GM12878 (cell line): ENCODE measurements at regions of chr9 and their contacts with region 1.

Region 1: DNA sequence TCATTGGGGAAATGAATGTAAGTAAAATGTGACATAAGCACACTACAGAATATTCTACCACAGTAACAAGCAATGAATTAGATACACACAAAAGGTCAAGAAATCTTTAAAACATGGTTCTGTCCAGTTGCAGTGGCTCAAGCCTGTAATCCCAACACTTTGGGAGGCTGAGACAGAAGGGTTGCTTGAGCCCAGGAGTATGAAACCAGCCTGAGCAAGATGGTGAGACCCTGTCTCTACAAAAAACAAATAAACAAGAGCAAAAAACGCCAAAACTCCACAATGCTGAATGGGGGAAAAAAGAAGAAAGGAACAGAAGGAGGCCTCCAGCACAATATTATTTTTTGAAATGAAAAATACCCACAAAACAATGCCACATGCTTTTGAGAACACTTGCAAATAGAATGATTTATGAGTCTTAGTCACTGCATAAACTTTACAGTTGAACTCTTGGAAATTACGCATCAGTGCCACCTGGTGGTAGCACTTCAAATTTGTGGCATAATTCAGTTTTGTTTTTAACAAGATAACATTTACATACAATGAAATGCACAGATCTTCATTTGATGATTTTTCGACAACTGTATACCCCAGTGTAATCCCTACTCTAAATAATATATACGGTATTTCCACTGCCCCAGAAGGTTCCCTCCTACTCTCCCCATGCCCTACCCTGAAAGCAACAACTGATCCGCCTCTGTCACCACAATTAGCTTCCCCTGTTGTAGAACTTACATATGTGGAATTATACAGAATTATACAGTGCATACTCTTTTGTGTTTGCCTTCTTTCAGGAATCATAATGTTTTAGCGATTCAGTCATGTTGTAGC is 14.4 kb upstream of the SPINK4 start:
- DNase-seq: peak; percentile 64
- ATAC-seq: peak; percentile 63
- H3K4me3 ChIP-seq: no peak overlapping the region
- H3K27ac ChIP-seq: no peak overlapping the region
- H3K4me1 ChIP-seq: peaks cover 39% of the 10 kb centered on the region
- H3K27me3 ChIP-seq: no peaks in the 10 kb centered on the region
- CTCF ChIP-seq: peak; percentile 56 to 76 (median 64); a peak in 5 of 6 replicates
- EP300 ChIP-seq: no peak
- POLR2A ChIP-seq: no peak
- RAD21 ChIP-seq: peak; percentile 85

Region 2: DNA sequence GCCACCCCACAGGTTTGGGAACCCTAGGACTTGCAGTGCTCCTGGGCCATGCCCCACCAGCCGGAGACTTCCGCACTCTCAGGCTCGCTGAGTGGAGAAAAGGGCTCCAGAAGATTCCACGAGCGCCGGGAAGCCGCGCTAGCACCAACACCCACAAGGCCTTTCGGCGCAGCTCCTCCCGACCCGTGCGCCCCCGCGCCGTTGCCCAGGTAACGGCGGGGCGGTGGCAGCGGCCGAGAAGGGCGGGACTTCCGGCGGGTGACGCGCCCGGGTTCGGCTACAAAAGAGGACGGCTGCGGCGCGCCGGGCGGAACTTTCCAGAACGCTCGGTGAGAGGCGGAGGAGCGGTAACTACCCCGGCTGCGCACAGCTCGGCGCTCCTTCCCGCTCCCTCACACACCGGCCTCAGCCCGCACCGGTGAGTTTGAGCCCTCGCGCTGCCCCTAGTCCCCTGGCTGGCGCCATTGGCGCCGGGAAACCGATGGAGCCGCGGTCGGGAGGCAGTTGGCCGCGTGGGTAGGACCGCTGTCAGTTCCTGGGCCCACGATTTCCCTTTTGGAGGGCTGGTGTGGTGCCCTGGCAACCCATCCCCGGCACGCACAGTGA is 200.5 kb before region 1 on chr9 and contains the start of gene DNAJA1:
- CTCF ChIA-PET with region 1: interaction called, 8 read pairs
- POLR2A ChIA-PET with region 1: interaction called, 3 read pairs
- RAD21 ChIA-PET with region 1: interaction called, 15 read pairs
- SMC1A ChIA-PET with region 1: interaction called, 4 read pairs
- in situ Hi-C with region 1: no loop called
- intact Hi-C with region 1: loop called (anchors 2 kb)
- DNase-seq: peak; percentile 57
- ATAC-seq: peak; percentile 90
- H3K4me3 ChIP-seq: peak within 1 kb of the TSS; percentile 75
- H3K27ac ChIP-seq: peak within 1 kb of the TSS; percentile 97
- H3K4me1 ChIP-seq: peaks cover 10% of the 10 kb centered on the region
- H3K27me3 ChIP-seq: no peaks in the 10 kb centered on the region
- CTCF ChIP-seq: no peak
- EP300 ChIP-seq: no peak; a peak in 1 of 4 replicates
- POLR2A ChIP-seq: peak; percentile 99
- RAD21 ChIP-seq: no peak
- polyA plus RNA-seq, gene DNAJA1: 115 to 149 TPM

Region 3: GRCh38 chr9:33130508-33130911 is 95.0 kb before region 1 on chr9:
- CTCF ChIA-PET with region 1: interaction called, 21 read pairs
- POLR2A ChIA-PET with region 1: no interaction called
- RAD21 ChIA-PET with region 1: interaction called, 17 read pairs
- SMC1A ChIA-PET with region 1: interaction called, 22 read pairs
- in situ Hi-C with region 1: no loop called
- intact Hi-C with region 1: loop called (anchors 2 kb)
- DNase-seq: no peak
- ATAC-seq: peak; percentile 92
- H3K4me3 ChIP-seq: peak overlapping the region; percentile 1; the same call in 1 of the 2 replicates
- H3K27ac ChIP-seq: peak overlapping the region; percentile 75
- H3K4me1 ChIP-seq: peaks cover 52% of the 10 kb centered on the region
- H3K27me3 ChIP-seq: no peaks in the 10 kb centered on the region
- CTCF ChIP-seq: no peak
- EP300 ChIP-seq: no peak
- POLR2A ChIP-seq: no peak
- RAD21 ChIP-seq: 0 out of 2 replicates have a peak, but pooled peaks have one; percentile 4

Region 4: GRCh38 chr9:33159760-33160127 is 65.8 kb before region 1 on chr9:
- CTCF ChIA-PET with region 1: interaction called, 10 read pairs
- POLR2A ChIA-PET with region 1: interaction called, 3 read pairs
- RAD21 ChIA-PET with region 1: interaction called, 21 read pairs
- SMC1A ChIA-PET with region 1: interaction called, 34 read pairs
- in situ Hi-C with region 1: no loop called
- intact Hi-C with region 1: no loop called
- DNase-seq: no peak
- ATAC-seq: peak; percentile 60
- H3K4me3 ChIP-seq: peak overlapping the region; percentile 90
- H3K27ac ChIP-seq: peak overlapping the region; percentile 92
- H3K4me1 ChIP-seq: peaks cover 74% of the 10 kb centered on the region
- H3K27me3 ChIP-seq: no peaks in the 10 kb centered on the region
- CTCF ChIP-seq: no peak
- EP300 ChIP-seq: peak in 1 of 2 experiments; percentile 81; a peak in 3 of 4 replicates
- POLR2A ChIP-seq: peak; percentile 53; the same call in 1 of the 2 replicates
- RAD21 ChIP-seq: 0 out of 2 replicates have a peak, but pooled peaks have one; percentile 18

Region 5: GRCh38 chr9:33177639-33178038 is 47.9 kb before region 1 on chr9:
- CTCF ChIA-PET with region 1: interaction called, 13 read pairs
- POLR2A ChIA-PET with region 1: interaction called, 3 read pairs
- RAD21 ChIA-PET with region 1: interaction called, 3 read pairs
- SMC1A ChIA-PET with region 1: interaction called, 23 read pairs
- in situ Hi-C with region 1: no loop called
- intact Hi-C with region 1: no loop called
- DNase-seq: no peak
- ATAC-seq: peak; percentile 89
- H3K4me3 ChIP-seq: no peak overlapping the region
- H3K27ac ChIP-seq: no peak overlapping the region
- H3K4me1 ChIP-seq: no peaks in the 10 kb centered on the region
- H3K27me3 ChIP-seq: no peaks in the 10 kb centered on the region
- CTCF ChIP-seq: no peak
- EP300 ChIP-seq: no peak
- POLR2A ChIP-seq: no peak
- RAD21 ChIP-seq: no peak

Region 6: DNA sequence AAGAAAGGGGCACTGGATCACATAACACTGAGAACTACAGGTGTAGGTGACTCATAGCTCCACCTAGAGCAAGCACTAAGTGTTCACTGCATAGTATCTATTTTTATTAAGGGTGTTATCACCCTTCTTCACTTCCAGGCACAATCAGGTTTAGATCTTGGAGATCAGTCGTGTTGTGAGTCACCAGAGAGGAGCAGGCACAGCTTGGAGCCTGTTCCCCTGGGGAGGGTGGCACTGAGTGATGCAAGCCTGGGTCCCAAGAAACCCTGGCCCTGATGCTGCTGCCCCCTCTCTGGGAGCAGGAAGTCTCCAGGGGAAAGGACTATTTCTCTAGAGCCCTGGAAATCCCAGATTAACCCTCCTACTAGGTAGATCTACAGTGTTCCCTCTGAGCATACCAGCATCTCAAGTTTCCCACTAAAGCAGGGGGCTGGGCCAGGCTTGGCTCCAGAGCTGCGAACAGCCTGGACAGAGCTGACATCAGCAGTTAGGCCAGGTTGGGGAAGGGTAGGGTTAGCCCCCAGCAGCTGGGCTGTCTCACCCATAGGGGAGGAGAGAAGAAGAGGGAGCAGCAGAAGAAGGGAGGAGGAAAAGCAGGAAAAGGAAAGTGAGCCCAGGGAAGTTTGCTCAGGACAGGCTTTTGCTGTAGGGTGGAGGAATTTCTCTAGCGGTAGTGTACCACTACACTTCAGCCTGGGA is 13.7 kb before region 1 on chr9:
- CTCF ChIA-PET with region 1: interaction called, 12 read pairs
- POLR2A ChIA-PET with region 1: no interaction called
- RAD21 ChIA-PET with region 1: interaction called, 3 read pairs
- SMC1A ChIA-PET with region 1: interaction called, 8 read pairs
- in situ Hi-C with region 1: no loop called
- intact Hi-C with region 1: no loop called
- DNase-seq: no peak
- ATAC-seq: peak; percentile 61
- H3K4me3 ChIP-seq: no peak overlapping the region
- H3K27ac ChIP-seq: no peak overlapping the region
- H3K4me1 ChIP-seq: no peaks in the 10 kb centered on the region
- H3K27me3 ChIP-seq: no peaks in the 10 kb centered on the region; a peak in 1 of 4 replicates
- CTCF ChIP-seq: peak in 2 of 3 experiments; percentile 8 to 14; a peak in 1 of 6 replicates
- EP300 ChIP-seq: no peak
- POLR2A ChIP-seq: no peak
- RAD21 ChIP-seq: 0 out of 2 replicates have a peak, but pooled peaks have one; percentile 9

Region 7: DNA sequence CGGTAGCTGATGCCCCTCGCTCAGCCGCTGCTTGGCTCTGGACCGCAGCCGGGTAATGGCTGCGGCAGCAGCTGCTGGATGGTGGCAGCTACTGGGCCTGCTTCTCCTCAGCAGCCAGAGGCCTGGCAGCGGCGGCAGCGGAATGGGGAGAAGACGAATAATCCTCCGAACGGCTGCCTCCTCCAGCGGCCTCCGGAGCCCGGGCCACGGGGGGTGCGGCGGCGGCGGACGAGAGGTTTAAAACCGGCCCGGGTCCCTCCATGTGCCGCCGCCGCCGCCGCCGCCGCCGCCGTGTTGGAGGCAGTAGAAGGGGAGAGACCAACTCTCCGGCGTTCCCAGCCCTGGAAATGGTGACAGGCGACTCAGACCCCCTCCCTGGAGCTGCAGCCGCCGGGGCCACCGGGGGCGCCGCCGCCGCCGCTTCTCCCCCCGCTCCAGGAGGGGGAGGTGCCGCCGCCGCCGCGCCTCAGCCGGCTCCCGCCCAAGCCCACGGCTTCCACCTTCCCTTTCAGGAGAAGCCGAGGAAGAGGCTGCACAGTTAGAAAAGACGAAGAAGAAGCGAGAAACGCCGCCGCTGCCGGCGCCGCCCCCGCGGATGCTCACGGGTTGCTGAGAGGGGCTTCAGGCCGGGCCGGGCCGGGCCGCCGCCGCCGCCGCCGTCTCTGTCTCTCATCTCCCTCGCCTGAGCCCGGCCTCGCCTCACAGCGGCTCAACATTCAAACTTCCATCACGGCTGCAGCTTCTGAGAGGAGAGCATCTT is 451.4 kb after region 1 on chr9:
- CTCF ChIA-PET with region 1: no interaction called
- POLR2A ChIA-PET with region 1: no interaction called
- RAD21 ChIA-PET with region 1: no interaction called
- SMC1A ChIA-PET with region 1: no interaction called
- in situ Hi-C with region 1: no loop called
- intact Hi-C with region 1: no loop called
- DNase-seq: no peak
- ATAC-seq: peak; percentile 65
- H3K4me3 ChIP-seq: peak overlapping the region; percentile 47
- H3K27ac ChIP-seq: no peak overlapping the region
- H3K4me1 ChIP-seq: no peaks in the 10 kb centered on the region
- H3K27me3 ChIP-seq: peaks cover 0 to 5% of the 10 kb centered on the region in 2 experiments; a peak in 2 of 4 replicates
- CTCF ChIP-seq: no peak
- EP300 ChIP-seq: no peak
- POLR2A ChIP-seq: no peak
- RAD21 ChIP-seq: no peak